ENCODE measurements at regions of chr12 and their contacts with region 1.

Region 1: DNA sequence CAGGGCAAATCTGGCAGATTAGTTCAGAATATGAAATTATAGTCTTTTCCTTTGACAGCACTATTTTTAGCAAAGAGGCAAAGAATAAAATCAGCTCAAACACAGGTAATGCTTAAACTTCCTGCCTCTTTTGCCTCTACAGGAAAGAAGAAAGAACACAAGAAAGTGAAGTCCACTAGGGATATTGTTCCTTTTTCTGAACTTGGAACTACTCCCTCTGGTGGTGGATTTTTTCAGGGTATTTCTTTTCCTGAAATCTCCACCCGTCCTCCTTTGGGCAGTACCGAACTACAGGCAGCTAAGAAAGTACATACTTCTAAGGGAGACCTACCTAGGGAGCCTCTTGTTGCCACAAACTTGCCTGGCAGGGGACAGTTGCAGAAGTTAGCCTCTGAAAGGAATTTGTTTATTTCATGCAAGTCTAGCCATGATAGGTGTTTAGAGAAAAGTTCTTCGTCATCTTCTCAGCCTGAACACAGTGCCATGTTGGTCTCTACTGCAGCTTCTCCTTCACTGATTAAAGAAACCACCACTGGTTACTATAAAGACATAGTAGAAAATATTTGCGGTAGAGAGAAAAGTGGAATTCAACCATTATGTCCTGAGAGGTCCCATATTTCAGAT is 17.4 kb downstream of the TMPO start:
- DNase-seq: no peak
- ATAC-seq: peak; percentile 62
- H3K4me3 Mint-ChIP-seq: no peak overlapping the region
- H3K27ac Mint-ChIP-seq: no peak overlapping the region
- H3K4me1 Mint-ChIP-seq: peaks cover 21% of the 10 kb centered on the region
- H3K27me3 Mint-ChIP-seq: no peaks in the 10 kb centered on the region

Region 2: GRCh38 chr12:97927977-97928376 is 604.8 kb before region 1 on chr12:
- CTCF ChIA-PET with region 1: no interaction called
- POLR2A ChIA-PET with region 1: no interaction called
- DNase-seq: no peak
- ATAC-seq: no peak
- H3K4me3 Mint-ChIP-seq: no peak overlapping the region
- H3K27ac Mint-ChIP-seq: no peak overlapping the region
- H3K4me1 Mint-ChIP-seq: no peaks in the 10 kb centered on the region
- H3K27me3 Mint-ChIP-seq: no peaks in the 10 kb centered on the region

Region 3: GRCh38 chr12:98470469-98471082 is 62.2 kb before region 1 on chr12:
- CTCF ChIA-PET with region 1: no interaction called
- POLR2A ChIA-PET with region 1: no interaction called
- DNase-seq: no peak
- ATAC-seq: no peak
- H3K4me3 Mint-ChIP-seq: no peak overlapping the region
- H3K27ac Mint-ChIP-seq: no peak overlapping the region
- H3K4me1 Mint-ChIP-seq: no peaks in the 10 kb centered on the region
- H3K27me3 Mint-ChIP-seq: peaks cover 14% of the 10 kb centered on the region

Region 4: DNA sequence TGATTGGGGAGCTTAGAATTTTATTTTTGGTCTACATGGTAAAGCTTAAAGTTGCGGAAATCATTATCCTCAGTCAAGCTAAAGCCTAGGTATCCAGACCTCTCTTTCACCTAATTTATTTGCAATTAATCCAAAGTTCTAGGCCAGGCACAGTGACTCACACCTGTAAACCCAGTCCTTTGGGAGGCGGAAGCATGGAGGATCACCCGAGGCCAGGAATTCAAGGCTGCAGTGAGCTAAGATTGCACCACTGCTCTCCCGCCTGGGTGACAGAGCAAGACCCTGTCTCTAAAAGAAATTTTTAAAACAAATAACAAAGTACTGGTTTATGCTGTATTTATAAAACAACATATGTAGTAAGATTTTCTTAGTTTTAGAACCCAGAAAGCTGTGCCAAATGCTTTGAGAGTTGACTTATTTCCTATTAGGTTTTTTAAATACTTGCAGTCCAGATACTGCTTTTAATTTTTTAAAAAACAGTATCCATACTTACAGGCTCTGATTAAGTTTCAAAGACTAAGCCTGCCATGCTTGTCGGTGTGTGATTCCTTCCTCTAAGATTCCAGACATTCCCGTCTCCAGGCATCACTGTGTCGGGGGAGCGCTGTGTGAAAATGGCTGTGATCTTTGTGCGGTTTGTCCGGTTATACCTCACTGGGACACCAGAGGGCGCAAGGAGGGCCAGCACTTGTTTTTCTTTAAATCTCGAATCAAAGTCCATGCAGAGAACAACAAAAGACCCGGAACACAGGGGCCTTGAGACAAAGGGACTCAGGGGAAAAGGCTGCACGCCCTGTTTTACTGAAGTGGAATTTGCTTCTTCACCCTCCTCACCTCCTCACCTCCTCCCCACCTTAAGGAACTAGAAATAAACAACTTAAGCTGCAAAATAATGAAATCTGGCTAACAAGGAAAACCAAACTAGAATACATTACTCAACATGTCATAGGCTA is 42.0 kb before region 1 on chr12:
- CTCF ChIA-PET with region 1: interaction called, 24 read pairs
- POLR2A ChIA-PET with region 1: no interaction called
- DNase-seq: peak; percentile 88
- ATAC-seq: peak; percentile 95
- H3K4me3 Mint-ChIP-seq: peak overlapping the region; percentile 60
- H3K27ac Mint-ChIP-seq: peak overlapping the region; percentile 94
- H3K4me1 Mint-ChIP-seq: peaks cover 7% of the 10 kb centered on the region
- H3K27me3 Mint-ChIP-seq: peaks cover 8% of the 10 kb centered on the region

Region 5: GRCh38 chr12:98544751-98545150 is 12.0 kb after region 1 on chr12:
- CTCF ChIA-PET with region 1: interaction called, 22 read pairs
- POLR2A ChIA-PET with region 1: no interaction called
- DNase-seq: no peak
- ATAC-seq: no peak
- H3K4me3 Mint-ChIP-seq: no peak overlapping the region
- H3K27ac Mint-ChIP-seq: no peak overlapping the region
- H3K4me1 Mint-ChIP-seq: peaks cover 4% of the 10 kb centered on the region
- H3K27me3 Mint-ChIP-seq: no peaks in the 10 kb centered on the region

Region 6: GRCh38 chr12:98550803-98551202 is 18.0 kb after region 1 on chr12:
- CTCF ChIA-PET with region 1: interaction called, 22 read pairs
- POLR2A ChIA-PET with region 1: interaction called, 3 read pairs
- DNase-seq: no peak
- ATAC-seq: no peak
- H3K4me3 Mint-ChIP-seq: no peak overlapping the region
- H3K27ac Mint-ChIP-seq: no peak overlapping the region
- H3K4me1 Mint-ChIP-seq: no peaks in the 10 kb centered on the region
- H3K27me3 Mint-ChIP-seq: no peaks in the 10 kb centered on the region

Measured in activated CD8-positive, alpha-beta T cell treated with anti-CD3 and anti-CD28 coated beads, Interleukin-2, amount 10 ng/mL, durations not matched to agents 7 days and 5 days (primary cell).